ENCODE measurements at regions of chr17 and their contacts with region 1.

Region 1: DNA sequence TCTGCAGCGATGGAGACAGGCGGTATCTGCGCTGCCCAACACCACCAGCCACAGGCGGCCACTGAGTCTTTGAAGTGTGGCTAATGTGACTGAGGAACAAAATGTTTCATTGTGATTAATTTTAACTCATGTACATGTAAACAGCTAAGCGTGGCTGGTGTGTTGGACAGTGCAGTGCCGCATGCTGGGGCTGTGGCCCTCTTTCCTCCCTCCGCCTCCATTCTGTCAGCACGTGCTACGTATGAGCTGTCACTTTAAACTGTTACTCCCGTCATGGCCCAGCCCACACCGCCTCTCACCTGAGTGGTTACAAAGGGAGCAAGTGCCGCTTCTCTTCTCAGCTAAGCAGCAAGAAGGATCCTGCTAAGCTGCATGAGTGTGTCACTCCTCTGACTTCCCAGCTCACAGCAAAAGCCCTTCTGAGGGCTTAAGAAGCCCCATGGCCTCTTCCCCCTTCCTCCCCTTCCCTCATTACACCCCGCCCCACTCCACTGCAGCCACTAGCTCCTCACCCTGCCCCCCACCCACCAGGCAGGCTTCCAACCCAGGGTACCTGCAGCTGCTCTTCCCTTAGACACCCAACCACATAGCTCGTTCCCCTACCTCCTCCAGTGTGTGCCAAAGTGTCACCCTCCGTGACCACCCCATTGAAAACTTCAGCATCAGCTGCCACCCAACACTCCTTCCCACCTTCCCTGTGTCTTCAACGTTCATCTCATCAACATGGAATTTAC is 15.0 kb downstream of the HASPIN start:
- DNase-seq: no peak
- ATAC-seq: 0 out of 6 replicates have a peak, but pooled peaks of 1 of the 2 experiments have one; percentile 10
- H3K4me3 ChIP-seq: no peak overlapping the region
- H3K27ac ChIP-seq: peak overlapping the region in 1 of 2 experiments; percentile 25; a peak in 1 of 6 replicates
- H3K4me1 ChIP-seq: peaks cover 3% of the 10 kb centered on the region; the same call in 1 of the 3 replicates
- CTCF ChIP-seq: no peak
- EP300 ChIP-seq: no peak
- POLR2A ChIP-seq: no peak
- RAD21 ChIP-seq: no peak

Region 2: DNA sequence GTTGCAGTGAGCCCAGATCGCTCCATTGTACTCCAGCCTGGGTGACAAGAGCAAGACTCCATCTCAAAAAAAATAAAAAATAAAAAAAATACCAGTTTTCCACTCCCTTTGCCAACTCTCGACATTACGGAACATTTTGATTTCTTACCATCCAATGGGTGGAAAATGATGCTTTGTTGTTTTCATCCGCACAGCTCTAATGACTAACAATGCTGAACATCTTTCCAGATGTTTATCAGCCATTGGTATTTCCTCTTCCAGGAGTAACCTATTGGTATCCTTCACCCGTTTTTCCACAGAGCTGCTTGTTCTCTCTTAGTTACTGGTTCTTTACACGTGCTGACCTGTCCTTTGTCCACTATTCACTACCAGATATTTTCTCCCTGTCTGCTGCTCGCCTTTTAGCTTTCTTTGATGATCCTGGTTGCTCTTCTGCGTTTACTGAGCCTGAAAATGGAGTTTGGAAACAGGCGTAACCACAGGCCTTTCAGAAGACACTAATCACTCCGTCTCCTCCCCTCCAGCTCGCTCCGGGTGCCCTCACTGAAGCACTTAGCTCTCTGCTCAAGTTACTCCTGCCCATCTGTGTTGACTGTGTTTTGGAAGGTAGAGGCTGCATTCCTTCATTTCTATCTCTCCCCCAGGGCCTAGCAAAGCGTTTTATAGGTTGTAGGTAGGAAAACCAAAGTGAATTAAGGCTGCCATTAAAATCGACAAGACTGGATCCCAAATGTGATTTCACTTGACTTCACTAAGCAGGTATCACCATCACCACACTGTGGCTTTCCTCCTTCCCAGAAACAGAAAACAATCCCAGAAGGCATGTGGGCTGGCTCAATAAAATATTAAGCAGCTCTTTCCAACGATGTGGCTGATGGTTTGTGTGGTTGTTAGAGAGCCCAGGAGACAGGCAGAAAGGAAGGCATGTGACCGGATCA is 111.6 kb before region 1 on chr17:
- CTCF ChIA-PET with region 1: no interaction called
- POLR2A ChIA-PET with region 1: no interaction called
- DNase-seq: no peak
- ATAC-seq: no peak
- H3K4me3 ChIP-seq: no peak overlapping the region
- H3K27ac ChIP-seq: no peak overlapping the region
- H3K4me1 ChIP-seq: no peaks in the 10 kb centered on the region
- CTCF ChIP-seq: no peak
- EP300 ChIP-seq: no peak
- POLR2A ChIP-seq: no peak
- RAD21 ChIP-seq: no peak

Region 3: GRCh38 chr17:3723556-3724369 is 15.0 kb before region 1 on chr17 and contains the start of gene HASPIN:
- CTCF ChIA-PET with region 1: interaction called, 141 read pairs
- POLR2A ChIA-PET with region 1: interaction called, 4 read pairs
- DNase-seq: peak; percentile 94 to 97
- ATAC-seq: peak; percentile 94 to 95
- H3K4me3 ChIP-seq: peak within 1 kb of the TSS; percentile 60
- H3K27ac ChIP-seq: peak within 1 kb of the TSS; percentile 88 to 89
- H3K4me1 ChIP-seq: peaks cover 42% of the 10 kb centered on the region
- CTCF ChIP-seq: no peak
- EP300 ChIP-seq: no peak; a peak in 1 of 5 replicates
- POLR2A ChIP-seq: peak; percentile 93
- RAD21 ChIP-seq: no peak; a peak in 1 of 5 replicates
- polyA plus RNA-seq, gene HASPIN: 8.7 and 10.0 TPM in 2 replicates

Region 4: DNA sequence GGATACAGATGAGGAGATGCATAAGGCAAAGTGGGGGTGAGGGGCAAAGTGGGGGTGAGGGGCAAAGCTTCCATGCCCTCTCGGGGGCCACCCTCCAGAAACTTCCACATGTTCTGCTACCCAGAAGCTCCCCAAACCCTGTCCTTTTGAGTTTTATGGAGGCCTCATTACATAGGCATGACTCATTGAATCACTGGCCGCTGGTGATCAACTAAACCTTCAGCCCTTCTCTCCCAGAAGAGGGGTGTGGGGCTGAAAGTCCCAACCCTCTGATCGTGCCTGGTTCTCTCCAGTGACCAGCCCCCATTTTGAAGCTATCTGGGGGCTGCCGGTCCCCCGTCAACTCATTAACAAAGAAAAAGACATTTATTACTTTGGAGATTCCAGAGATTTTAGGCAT is 34.8 kb after region 1 on chr17:
- CTCF ChIA-PET with region 1: interaction called, 57 read pairs
- POLR2A ChIA-PET with region 1: no interaction called
- DNase-seq: peak in 1 of 2 experiments; percentile 46
- ATAC-seq: peak; percentile 45 to 79; a peak in 4 of 6 replicates
- H3K4me3 ChIP-seq: no peak overlapping the region
- H3K27ac ChIP-seq: peak overlapping the region; percentile 36 to 67; a peak in 5 of 6 replicates
- H3K4me1 ChIP-seq: peaks cover 13% of the 10 kb centered on the region
- CTCF ChIP-seq: no peak
- EP300 ChIP-seq: no peak
- POLR2A ChIP-seq: no peak
- RAD21 ChIP-seq: no peak

Region 5: DNA sequence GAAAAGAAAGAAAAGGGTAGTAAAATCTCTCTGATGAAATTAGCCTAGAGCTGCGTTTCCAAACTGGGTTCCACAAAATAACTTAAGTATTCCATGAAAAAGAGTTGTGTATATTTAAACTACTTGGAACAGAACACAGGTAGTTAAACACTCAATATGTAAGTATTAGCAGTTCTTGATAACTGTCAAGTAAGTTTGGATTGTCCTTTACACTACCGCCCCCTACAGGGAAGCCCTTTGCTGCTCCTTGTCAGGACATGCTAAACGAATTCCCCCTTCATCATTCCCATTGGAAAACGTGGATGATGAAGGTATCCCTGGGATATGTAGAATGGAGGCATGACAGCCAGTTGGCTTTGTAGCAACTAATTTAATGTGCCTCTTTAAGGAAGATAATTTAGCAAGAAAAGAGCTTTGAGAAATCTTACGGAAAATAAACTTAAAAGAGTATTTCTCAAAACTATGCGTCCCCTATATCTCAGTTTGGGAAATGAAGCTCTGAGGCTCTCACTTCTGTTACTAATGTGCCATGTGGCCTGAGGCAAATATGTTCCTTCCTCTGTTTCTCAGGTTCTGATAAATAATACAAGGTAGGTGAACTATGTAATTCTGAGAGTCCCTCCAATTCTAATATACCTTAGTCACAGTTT is 88.5 kb after region 1 on chr17:
- CTCF ChIA-PET with region 1: interaction called, 491 read pairs
- POLR2A ChIA-PET with region 1: interaction called, 3 read pairs
- DNase-seq: peak; percentile 75 to 86
- ATAC-seq: peak; percentile 86 to 88
- H3K4me3 ChIP-seq: no peak overlapping the region
- H3K27ac ChIP-seq: no peak overlapping the region
- H3K4me1 ChIP-seq: no peaks in the 10 kb centered on the region
- CTCF ChIP-seq: peak; percentile 87
- EP300 ChIP-seq: no peak
- POLR2A ChIP-seq: no peak
- RAD21 ChIP-seq: peak; percentile 81 to 88

Region 6: GRCh38 chr17:3865176-3865575 is 126.4 kb after region 1 on chr17:
- CTCF ChIA-PET with region 1: interaction called, 104 read pairs
- POLR2A ChIA-PET with region 1: no interaction called
- DNase-seq: no peak
- ATAC-seq: peak; percentile 42 to 57
- H3K4me3 ChIP-seq: no peak overlapping the region
- H3K27ac ChIP-seq: peak overlapping the region in 1 of 2 experiments; percentile 36; a peak in 3 of 6 replicates
- H3K4me1 ChIP-seq: peaks cover 9% of the 10 kb centered on the region; the same call in 2 of the 3 replicates
- CTCF ChIP-seq: no peak
- EP300 ChIP-seq: no peak
- POLR2A ChIP-seq: no peak
- RAD21 ChIP-seq: no peak

Region 7: GRCh38 chr17:3907483-3908216 is 168.9 kb after region 1 on chr17:
- CTCF ChIA-PET with region 1: interaction called, 64 read pairs
- POLR2A ChIA-PET with region 1: no interaction called
- DNase-seq: peak in 1 of 2 experiments; percentile 40
- ATAC-seq: peak; percentile 37 to 48; a peak in 4 of 6 replicates
- H3K4me3 ChIP-seq: no peak overlapping the region
- H3K27ac ChIP-seq: no peak overlapping the region
- H3K4me1 ChIP-seq: no peaks in the 10 kb centered on the region
- CTCF ChIP-seq: peak; percentile 52
- EP300 ChIP-seq: no peak
- POLR2A ChIP-seq: no peak
- RAD21 ChIP-seq: peak; percentile 72 to 83